Spleen (tissue), 13 donors: ENCODE measurements at regions of chrX and their contacts with region 1.

Region 1: GRCh38 chrX:30652527-30653414 is 452 bp upstream of the GK start:
- DNase-seq: peak; percentile 98
- H3K4me3 ChIP-seq: peak overlapping the region; percentile 46 to 85 (median 62)
- H3K27ac ChIP-seq: peak overlapping the region; percentile 57 to 94 (median 86)
- H3K4me1 ChIP-seq: peaks cover 0 to 39% (median 9%) of the 10 kb centered on the region in 6 donors
- H3K27me3 ChIP-seq: no peaks in the 10 kb centered on the region
- CTCF ChIP-seq: peak in 3 of 11 experiments; percentile 3 to 15 (median 11)
- POLR2A ChIP-seq: peak in 1 of 3 donors; percentile 27

Region 2: GRCh38 chrX:29926056-29926455 is 726.7 kb before region 1 on chrX:
- intact Hi-C with region 1: no loop called
- DNase-seq: no peak
- H3K4me3 ChIP-seq: no peak overlapping the region
- H3K27ac ChIP-seq: no peak overlapping the region
- H3K4me1 ChIP-seq: no peaks in the 10 kb centered on the region
- H3K27me3 ChIP-seq: peaks cover 0 to 5% (median 0%) of the 10 kb centered on the region in 7 donors
- CTCF ChIP-seq: no peak
- POLR2A ChIP-seq: no peak

Region 3: GRCh38 chrX:30170900-30171299 is 481.9 kb before region 1 on chrX:
- intact Hi-C with region 1: no loop called
- DNase-seq: no peak
- H3K4me3 ChIP-seq: no peak overlapping the region
- H3K27ac ChIP-seq: no peak overlapping the region
- H3K4me1 ChIP-seq: no peaks in the 10 kb centered on the region
- H3K27me3 ChIP-seq: no peaks in the 10 kb centered on the region
- CTCF ChIP-seq: no peak
- POLR2A ChIP-seq: no peak

Region 4: DNA sequence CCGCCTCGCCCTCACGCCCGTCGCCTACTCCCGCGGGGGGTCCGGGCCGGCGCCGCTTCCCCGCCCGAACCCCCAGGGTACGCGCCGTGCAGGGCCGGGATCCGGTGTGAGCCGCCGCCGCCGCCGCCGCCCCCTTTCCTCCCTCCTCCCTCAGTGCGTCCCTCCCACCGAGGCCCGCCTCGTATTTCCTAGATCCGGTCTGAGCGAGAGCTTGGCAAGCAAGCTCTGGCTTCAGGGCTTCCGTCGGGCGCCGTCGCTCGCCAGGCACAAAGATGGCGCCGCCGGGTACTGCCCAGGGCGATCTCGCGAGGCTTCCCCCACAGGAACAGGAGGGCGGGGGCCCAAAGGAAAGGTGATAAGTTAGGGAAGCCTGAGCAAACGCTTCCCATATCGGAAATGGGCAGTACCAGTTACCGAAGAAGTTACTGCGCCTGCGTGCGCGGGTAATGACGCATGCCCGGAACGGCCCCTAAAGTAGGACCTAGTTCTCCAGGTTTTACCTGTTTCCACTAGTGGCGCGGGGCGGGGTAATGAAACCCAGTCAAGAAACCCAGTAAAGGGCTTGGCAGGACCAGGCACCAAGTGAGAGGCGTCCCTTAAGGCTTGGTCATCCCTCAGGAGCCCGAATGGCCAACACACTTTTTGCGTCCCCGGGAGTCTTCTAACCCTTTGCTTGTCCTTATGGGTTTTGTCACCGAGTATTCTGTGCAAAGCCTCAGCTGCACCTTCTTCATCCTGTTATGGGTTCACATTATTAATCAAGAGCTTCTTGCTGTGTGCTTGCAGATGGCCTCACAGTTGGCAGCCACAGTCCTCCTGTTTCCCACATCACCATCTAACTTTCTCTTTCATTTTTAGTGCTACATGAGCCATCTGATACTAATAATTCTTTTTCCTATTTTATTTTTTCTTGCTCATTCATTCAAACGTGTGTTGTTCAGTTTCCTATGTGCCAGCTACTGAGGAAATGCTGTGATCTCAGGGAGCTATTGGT is 236.7 kb after region 1 on chrX and contains the start of gene TAB3:
- intact Hi-C with region 1: loop called (anchors 10 kb)
- DNase-seq: peak; percentile 97
- H3K4me3 ChIP-seq: peak within 1 kb of the TSS; percentile 46 to 87 (median 64)
- H3K27ac ChIP-seq: peak within 1 kb of the TSS; percentile 60 to 94 (median 90)
- H3K4me1 ChIP-seq: peaks cover 0 to 37% (median 10%) of the 10 kb centered on the region in 6 donors
- H3K27me3 ChIP-seq: no peaks in the 10 kb centered on the region
- CTCF ChIP-seq: peak in 4 of 11 experiments; percentile 13 to 43 (median 32)
- POLR2A ChIP-seq: no peak
- total RNA-seq, gene TAB3: 17.7 to 52.5 (median 23.8) TPM